ENCODE measurements at regions of chr2 and their contacts with region 1.

Region 1: DNA sequence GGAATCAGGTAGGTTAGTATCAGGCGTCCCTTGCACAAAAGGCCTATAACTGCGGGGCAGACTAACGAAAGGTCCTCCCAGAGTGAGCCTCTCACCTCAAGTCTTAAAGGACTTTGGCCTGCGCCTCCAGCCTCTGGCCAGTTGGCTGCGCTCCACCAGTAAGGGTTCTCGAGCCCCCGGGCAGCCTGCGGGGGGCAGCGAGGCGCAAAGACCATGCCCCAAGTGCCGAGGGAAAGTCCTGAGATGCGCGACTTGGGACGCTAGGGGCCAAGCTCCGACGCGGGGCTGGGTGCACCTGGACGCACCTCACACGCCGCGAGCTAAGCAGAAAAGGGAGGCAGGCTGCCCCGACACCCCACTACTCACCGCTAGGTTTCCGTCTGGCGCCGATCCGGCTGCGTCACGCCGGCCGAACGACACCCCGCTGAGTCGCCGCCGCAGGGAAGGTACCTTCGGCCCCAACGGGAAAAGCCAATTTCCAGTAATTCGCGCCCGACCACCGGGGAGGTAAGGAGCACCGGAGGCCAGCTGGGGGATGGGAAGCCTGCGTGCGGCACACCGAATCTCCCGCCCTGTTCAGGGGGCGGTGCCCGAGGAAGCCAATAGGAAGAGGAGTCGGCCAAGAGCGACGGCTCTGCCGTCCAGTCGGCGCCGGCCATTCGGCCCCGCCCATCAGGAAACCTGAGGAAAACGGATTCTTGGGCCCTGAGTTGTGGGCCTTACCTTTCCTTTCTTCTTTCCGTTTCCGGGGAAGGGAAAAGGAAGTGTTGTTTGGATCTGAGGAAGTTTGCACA is at the start of gene ORC2:
- DNase-seq: peak; percentile 94 to 97 (median 95)
- ATAC-seq: peak; percentile 98 to 99 (median 99)
- H3K4me3 ChIP-seq: peak within 1 kb of the TSS; percentile 69 to 97 (median 88)
- H3K27ac ChIP-seq: peak within 1 kb of the TSS; percentile 83 to 97 (median 92)
- H3K4me1 ChIP-seq: peaks cover 0 to 53% (median 35%) of the 10 kb centered on the region in 12 donors
- H3K27me3 ChIP-seq: no peaks in the 10 kb centered on the region
- CTCF ChIP-seq: peak; percentile 24 to 61 (median 50)
- POLR2A ChIP-seq: peak in 1 of 2 donors; percentile 51
- total RNA-seq, gene ORC2: 6.7 to 38.0 (median 24.0) TPM

Region 2: GRCh38 chr2:200888704-200889625 is 74.4 kb before region 1 on chr2 and contains the starts of genes NIF3L1 and PPIL3:
- intact Hi-C with region 1: loop called in 1 of 10 experiments (anchors 2 kb)
- DNase-seq: peak; percentile 95 to 97 (median 97)
- ATAC-seq: peak; percentile 96 to 98 (median 97)
- H3K4me3 ChIP-seq: peak within 1 kb of the TSS; percentile 57 to 89 (median 72)
- H3K27ac ChIP-seq: peak within 1 kb of the TSS; percentile 65 to 97 (median 92)
- H3K4me1 ChIP-seq: peaks cover 0 to 30% (median 13%) of the 10 kb centered on the region in 12 donors
- H3K27me3 ChIP-seq: no peaks in the 10 kb centered on the region
- CTCF ChIP-seq: no peak
- POLR2A ChIP-seq: peak in 1 of 2 donors; percentile 48
- total RNA-seq, gene NIF3L1: 16.6 to 27.1 (median 21.6) TPM
- total RNA-seq, gene PPIL3: 11.3 to 27.7 (median 22.2) TPM

Region 3: DNA sequence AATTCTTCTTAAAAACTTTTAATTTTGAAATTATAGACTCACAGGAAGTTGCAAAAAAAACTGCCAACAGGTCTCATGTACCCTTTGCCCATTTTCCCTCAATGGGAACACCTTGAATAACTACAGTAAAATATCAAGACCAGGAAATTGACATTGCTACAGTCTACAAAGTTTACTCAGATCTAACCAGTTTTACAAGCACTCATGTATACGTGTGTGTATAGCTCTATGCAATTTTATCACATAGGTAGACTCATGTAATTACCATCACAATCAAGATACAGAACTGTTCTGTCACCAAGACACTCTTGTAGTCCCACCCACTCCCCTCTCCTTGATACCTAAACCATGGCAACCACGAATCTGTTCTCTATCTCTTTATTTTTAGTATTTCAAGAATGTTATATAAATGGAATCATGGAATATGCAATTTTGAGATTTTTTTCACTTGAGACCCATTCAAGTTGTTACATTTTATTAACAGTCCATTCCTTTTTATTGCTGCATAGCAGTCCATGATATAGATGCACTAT is 101.5 kb after region 1 on chr2:
- intact Hi-C with region 1: loop called in 6 of 10 experiments (anchors 2 to 10 kb)
- DNase-seq: no peak
- ATAC-seq: no peak
- H3K4me3 ChIP-seq: no peak overlapping the region
- H3K27ac ChIP-seq: no peak overlapping the region
- H3K4me1 ChIP-seq: peaks cover 0 to 53% (median 23%) of the 10 kb centered on the region in 12 donors
- H3K27me3 ChIP-seq: no peaks in the 10 kb centered on the region
- CTCF ChIP-seq: no peak
- POLR2A ChIP-seq: no peak

Region 4: GRCh38 chr2:201158111-201158929 is 195.0 kb after region 1 on chr2:
- intact Hi-C with region 1: loop called in 1 of 10 experiments (anchors 5 kb)
- DNase-seq: peak in 4 of 5 donors; percentile 62 to 73 (median 70)
- ATAC-seq: peak; percentile 69 to 92 (median 82)
- H3K4me3 ChIP-seq: no peak overlapping the region
- H3K27ac ChIP-seq: peak overlapping the region in 11 of 12 donors; percentile 20 to 89 (median 66)
- H3K4me1 ChIP-seq: peaks cover 2 to 62% (median 23%) of the 10 kb centered on the region in 12 donors
- H3K27me3 ChIP-seq: no peaks in the 10 kb centered on the region
- CTCF ChIP-seq: peak; percentile 48 to 79 (median 62)
- POLR2A ChIP-seq: peak in 1 of 2 donors; percentile 13

Region 5: DNA sequence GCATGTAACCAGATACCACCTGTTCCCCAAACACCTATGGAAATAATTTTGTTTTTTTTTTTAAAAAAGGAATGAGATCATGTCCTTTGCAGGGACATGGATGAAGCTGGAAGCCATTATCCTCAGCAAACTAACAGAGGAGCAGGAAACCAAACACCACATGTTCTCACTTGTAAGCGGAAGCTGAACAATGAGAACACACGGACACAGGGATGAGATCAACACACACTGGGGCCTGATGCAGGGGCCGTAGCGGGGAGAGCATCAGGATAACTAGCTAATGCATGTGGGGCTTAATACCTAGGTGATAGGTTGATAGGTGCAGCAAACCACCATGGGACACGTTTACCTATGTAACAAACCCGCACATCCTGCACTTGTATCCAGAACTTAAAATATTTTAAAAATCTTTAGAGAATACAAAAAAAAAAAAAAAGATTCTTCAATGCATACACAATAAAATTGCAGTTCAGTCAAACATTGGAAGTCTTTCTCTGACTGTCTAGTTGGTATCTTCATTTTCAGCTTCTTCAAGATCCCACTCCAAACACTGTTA is 208.0 kb after region 1 on chr2:
- intact Hi-C with region 1: loop called in 2 of 10 experiments (anchors 5 kb)
- DNase-seq: no peak
- ATAC-seq: peak in 1 of 4 donors; percentile 19
- H3K4me3 ChIP-seq: no peak overlapping the region
- H3K27ac ChIP-seq: no peak overlapping the region
- H3K4me1 ChIP-seq: peaks cover 0 to 12% (median 0%) of the 10 kb centered on the region in 12 donors
- H3K27me3 ChIP-seq: no peaks in the 10 kb centered on the region
- CTCF ChIP-seq: no peak
- POLR2A ChIP-seq: no peak